Heart right ventricle (tissue), 16 donors: ENCODE measurements at regions of chr1 and their contacts with region 1.

Region 1: GRCh38 chr1:162612606-162613400 is 19.5 kb upstream of the DDR2 start:
- DNase-seq: peak in 1 of 2 donors; percentile 28
- ATAC-seq: peak in 7 of 8 donors; percentile 33 to 77 (median 41)
- H3K4me3 ChIP-seq: no peak overlapping the region
- H3K27ac ChIP-seq: peak overlapping the region in 5 of 10 donors; percentile 3 to 58 (median 44)
- H3K4me1 ChIP-seq: peaks cover 0 to 17% (median 10%) of the 10 kb centered on the region in 9 donors
- H3K27me3 ChIP-seq: no peaks in the 10 kb centered on the region
- CTCF ChIP-seq: no peak

Region 2: GRCh38 chr1:162596514-162597170 is 16.2 kb before region 1 on chr1:
- intact Hi-C with region 1: no loop called
- DNase-seq: no peak
- ATAC-seq: no peak
- H3K4me3 ChIP-seq: no peak overlapping the region
- H3K27ac ChIP-seq: no peak overlapping the region
- H3K4me1 ChIP-seq: no peaks in the 10 kb centered on the region
- H3K27me3 ChIP-seq: no peaks in the 10 kb centered on the region
- CTCF ChIP-seq: no peak

Region 3: GRCh38 chr1:162756523-162756922 is 143.7 kb after region 1 on chr1:
- intact Hi-C with region 1: loop called in 1 of 10 experiments (anchors 5 kb)
- DNase-seq: no peak
- ATAC-seq: peak in 1 of 8 donors; percentile 23
- H3K4me3 ChIP-seq: no peak overlapping the region
- H3K27ac ChIP-seq: no peak overlapping the region
- H3K4me1 ChIP-seq: no peaks in the 10 kb centered on the region
- H3K27me3 ChIP-seq: no peaks in the 10 kb centered on the region
- CTCF ChIP-seq: peak in 1 of 9 donors; percentile 14